SK-N-SH (cell line): ENCODE measurements at regions of chr1 and their contacts with region 1.

Region 1: DNA sequence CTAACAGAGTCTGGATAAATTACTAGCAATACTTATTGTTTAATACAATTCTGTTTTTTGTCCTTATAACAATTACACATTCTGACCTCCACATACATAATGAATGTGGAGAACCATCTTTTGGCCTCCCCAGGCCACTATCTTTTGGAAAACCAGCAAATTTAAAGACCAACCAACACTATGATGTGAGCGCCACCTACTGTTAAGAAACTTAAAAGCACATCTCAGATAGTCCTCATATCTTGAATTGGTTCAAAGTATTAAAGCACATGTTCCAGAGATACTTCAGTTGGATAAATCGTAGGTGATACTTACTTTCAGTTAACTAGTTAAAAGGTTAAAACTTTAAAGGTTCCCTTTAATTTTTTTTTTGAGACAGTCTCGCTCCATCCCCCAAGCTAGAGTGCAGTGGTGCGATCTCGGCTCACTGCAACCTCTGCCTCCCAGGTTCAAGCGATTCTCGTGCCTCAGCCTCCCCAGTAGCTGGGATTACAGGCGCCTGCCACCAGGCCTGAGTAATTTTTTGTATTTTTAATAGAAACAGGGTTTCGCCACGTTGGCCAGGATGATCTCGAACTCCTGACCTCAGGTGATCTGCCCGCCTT is 29.3 kb upstream of the USP1 start:
- DNase-seq: peak; percentile 65
- H3K4me3 ChIP-seq: no peak overlapping the region; a peak in 1 of 4 replicates
- H3K27ac ChIP-seq: no peak overlapping the region
- H3K4me1 ChIP-seq: no peaks in the 10 kb centered on the region
- H3K27me3 ChIP-seq: no peaks in the 10 kb centered on the region; the same call in 1 of the 2 replicates
- CTCF ChIP-seq: peak; percentile 89
- EP300 ChIP-seq: no peak
- RAD21 ChIP-seq: peak; percentile 95

Region 2: DNA sequence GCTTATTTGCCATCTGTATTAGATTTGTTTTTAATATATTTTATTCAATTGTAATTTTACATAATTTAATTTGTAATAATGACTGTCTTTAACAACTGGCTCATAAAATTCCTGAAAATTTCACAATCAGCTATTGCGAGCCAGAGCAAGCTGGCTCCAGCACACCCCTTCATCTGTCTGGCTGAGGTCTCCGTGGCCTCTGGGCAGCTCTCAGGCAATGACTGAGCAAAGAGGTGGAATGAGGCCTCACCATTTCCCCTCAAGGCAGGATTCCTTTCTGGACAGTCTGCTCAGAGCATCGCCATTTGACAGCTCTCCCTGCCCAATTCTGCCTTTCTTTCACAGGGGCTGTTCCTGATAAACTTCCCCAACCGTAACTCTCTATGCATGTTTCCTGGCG is 82.4 kb before region 1 on chr1:
- CTCF ChIA-PET with region 1: interaction called, 11 read pairs
- POLR2A ChIA-PET with region 1: no interaction called
- DNase-seq: no peak
- H3K4me3 ChIP-seq: no peak overlapping the region
- H3K27ac ChIP-seq: no peak overlapping the region
- H3K4me1 ChIP-seq: peaks cover 0 to 7% of the 10 kb centered on the region in 2 experiments; a peak in 1 of 4 replicates
- H3K27me3 ChIP-seq: no peaks in the 10 kb centered on the region; the same call in 1 of the 2 replicates
- CTCF ChIP-seq: no peak
- EP300 ChIP-seq: no peak
- RAD21 ChIP-seq: no peak

Region 3: GRCh38 chr1:62391369-62391971 is 16.0 kb before region 1 on chr1:
- CTCF ChIA-PET with region 1: interaction called, 20 read pairs
- POLR2A ChIA-PET with region 1: no interaction called
- DNase-seq: peak; percentile 21
- H3K4me3 ChIP-seq: no peak overlapping the region; a peak in 1 of 4 replicates
- H3K27ac ChIP-seq: no peak overlapping the region
- H3K4me1 ChIP-seq: peaks cover 0 to 2% of the 10 kb centered on the region in 2 experiments; a peak in 1 of 4 replicates
- H3K27me3 ChIP-seq: no peaks in the 10 kb centered on the region; the same call in 1 of the 2 replicates
- CTCF ChIP-seq: peak; percentile 58
- EP300 ChIP-seq: no peak
- RAD21 ChIP-seq: peak; percentile 36

Region 4: DNA sequence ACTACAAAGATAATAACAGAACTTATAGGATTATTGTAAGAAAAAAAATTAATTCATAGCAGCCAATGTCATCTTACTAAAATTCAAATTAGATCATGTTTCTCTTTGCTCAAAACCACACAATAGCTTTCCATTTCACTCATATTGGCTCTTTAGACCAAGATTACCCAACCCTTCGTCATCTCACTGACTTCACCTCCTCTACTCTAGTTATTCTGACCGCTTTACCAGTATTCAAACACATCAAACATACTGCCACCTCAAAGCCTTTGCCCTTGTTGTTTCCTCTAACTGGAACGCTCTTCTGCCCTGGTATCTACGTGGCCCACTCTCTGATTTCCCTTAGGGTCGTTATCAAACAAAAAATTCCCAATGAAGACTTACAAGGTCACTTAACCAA is 191.5 kb after region 1 on chr1:
- CTCF ChIA-PET with region 1: no interaction called
- POLR2A ChIA-PET with region 1: no interaction called
- DNase-seq: no peak
- H3K4me3 ChIP-seq: no peak overlapping the region
- H3K27ac ChIP-seq: no peak overlapping the region
- H3K4me1 ChIP-seq: peaks cover 0 to 7% of the 10 kb centered on the region in 2 experiments; a peak in 2 of 4 replicates
- H3K27me3 ChIP-seq: no peaks in the 10 kb centered on the region
- CTCF ChIP-seq: no peak
- EP300 ChIP-seq: no peak
- RAD21 ChIP-seq: no peak